ENCODE measurements at regions of chr3 and their contacts with region 1.

Region 1: GRCh38 chr3:187777331-187777941 is 32.2 kb upstream of the BCL6 start:
- DNase-seq: peak; percentile 24
- ATAC-seq: peak; percentile 78
- H3K4me3 Mint-ChIP-seq: peak overlapping the region; percentile 58
- H3K27ac Mint-ChIP-seq: peak overlapping the region; percentile 88
- H3K4me1 Mint-ChIP-seq: peaks cover 38% of the 10 kb centered on the region
- H3K27me3 Mint-ChIP-seq: no peaks in the 10 kb centered on the region
- CTCF ChIP-seq: no peak

Region 2: DNA sequence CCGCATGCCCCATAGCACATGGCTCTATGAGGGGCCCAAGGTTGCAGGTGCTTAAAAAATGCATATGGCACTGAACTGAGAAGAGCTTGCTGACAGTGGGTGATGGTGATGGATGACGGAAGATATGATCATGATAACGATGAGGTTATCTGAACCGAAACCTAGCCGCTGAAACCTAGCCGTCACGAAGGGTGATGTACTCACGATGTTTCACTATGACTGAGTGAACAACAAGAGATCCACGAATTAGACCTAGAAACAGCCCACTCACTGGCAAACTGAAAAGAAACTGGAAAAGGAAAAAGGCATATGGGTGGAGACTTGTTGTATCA is 25.5 kb after region 1 on chr3:
- CTCF ChIA-PET with region 1: no interaction called
- POLR2A ChIA-PET with region 1: interaction called, 4 read pairs
- intact Hi-C with region 1: loop called (anchors 1 kb)
- DNase-seq: no peak
- ATAC-seq: peak; percentile 76
- H3K4me3 Mint-ChIP-seq: peak overlapping the region; percentile 39
- H3K27ac Mint-ChIP-seq: peak overlapping the region; percentile 54
- H3K4me1 Mint-ChIP-seq: peaks cover 44% of the 10 kb centered on the region
- H3K27me3 Mint-ChIP-seq: no peaks in the 10 kb centered on the region
- CTCF ChIP-seq: no peak

Region 3: GRCh38 chr3:187919048-187919447 is 141.6 kb after region 1 on chr3:
- CTCF ChIA-PET with region 1: no interaction called
- POLR2A ChIA-PET with region 1: no interaction called
- intact Hi-C with region 1: loop called (anchors 1 kb)
- DNase-seq: peak; percentile 36
- ATAC-seq: peak; percentile 89
- H3K4me3 Mint-ChIP-seq: peak overlapping the region; percentile 77
- H3K27ac Mint-ChIP-seq: peak overlapping the region; percentile 86
- H3K4me1 Mint-ChIP-seq: peaks cover 32% of the 10 kb centered on the region
- H3K27me3 Mint-ChIP-seq: peaks cover 15% of the 10 kb centered on the region
- CTCF ChIP-seq: no peak